ENCODE measurements at regions of chr5 and their contacts with region 1.

Region 1: DNA sequence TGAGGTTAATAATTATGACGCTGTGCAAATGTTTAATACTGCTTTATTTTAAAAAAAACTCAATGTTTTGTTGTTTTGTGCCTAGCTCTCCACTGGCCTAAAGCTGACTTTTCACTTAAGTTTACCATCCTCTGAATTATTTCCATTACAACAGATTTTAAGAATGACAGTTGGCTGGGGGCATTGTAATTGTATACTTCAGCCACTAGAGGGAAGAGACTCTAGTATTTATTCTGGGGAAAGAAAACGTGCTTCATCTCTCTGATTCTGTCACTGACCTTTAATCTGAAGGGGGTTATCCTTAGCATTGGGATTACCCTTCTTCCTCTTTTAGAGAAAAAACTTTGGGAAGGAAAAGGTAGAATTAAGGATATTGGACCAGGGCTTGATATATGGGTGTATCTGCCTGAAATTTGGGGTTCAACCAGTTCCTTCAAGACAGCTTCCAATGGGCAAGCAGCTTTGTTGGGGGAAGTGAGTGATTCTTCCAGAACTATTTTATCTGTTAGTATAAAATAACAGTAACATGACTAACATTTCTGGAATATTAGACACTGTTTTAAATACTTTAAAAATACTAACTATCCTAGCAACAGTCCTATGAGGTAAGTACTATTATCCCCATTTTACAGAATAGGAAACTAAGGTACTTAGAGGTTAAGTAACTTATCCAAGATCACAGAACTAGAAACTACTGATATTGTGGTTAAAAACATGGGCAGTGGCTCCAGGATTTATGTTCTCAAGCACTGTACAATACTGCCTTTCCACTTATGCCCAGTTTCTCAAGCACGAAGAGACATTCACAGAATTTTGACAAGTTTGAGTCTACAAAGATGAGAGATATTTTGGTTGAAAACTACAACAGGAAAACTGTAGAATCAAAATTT is 208.4 kb downstream of the CD180 start:
- DNase-seq: peak; percentile 43
- ATAC-seq: peak; percentile 58
- H3K4me3 ChIP-seq: no peak overlapping the region
- H3K4me3 Mint-ChIP-seq: no peak overlapping the region
- H3K27ac ChIP-seq: no peak overlapping the region
- H3K27ac Mint-ChIP-seq: no peak overlapping the region
- H3K4me1 ChIP-seq: peaks cover 0 to 2% of the 10 kb centered on the region in 2 donors
- H3K4me1 Mint-ChIP-seq: peaks cover 2% of the 10 kb centered on the region
- H3K27me3 ChIP-seq: no peaks in the 10 kb centered on the region
- H3K27me3 Mint-ChIP-seq: no peaks in the 10 kb centered on the region
- CTCF ChIP-seq: peak; percentile 98

Region 2: GRCh38 chr5:67003935-67004729 is 15.9 kb after region 1 on chr5:
- CTCF ChIA-PET with region 1: interaction called, 8 read pairs
- POLR2A ChIA-PET with region 1: no interaction called
- intact Hi-C with region 1: loop called (anchors 2 kb)
- DNase-seq: peak; percentile 87
- ATAC-seq: peak; percentile 81
- H3K4me3 ChIP-seq: peak overlapping the region; percentile 44 to 91 (median 74)
- H3K4me3 Mint-ChIP-seq: peak overlapping the region; percentile 96
- H3K27ac ChIP-seq: peak overlapping the region in 1 of 2 donors; percentile 67
- H3K27ac Mint-ChIP-seq: peak overlapping the region; percentile 93
- H3K4me1 ChIP-seq: peaks cover 13 to 27% of the 10 kb centered on the region in 2 donors
- H3K4me1 Mint-ChIP-seq: peaks cover 35% of the 10 kb centered on the region
- H3K27me3 ChIP-seq: peaks cover 0 to 6% (median 2%) of the 10 kb centered on the region in 4 experiments
- H3K27me3 Mint-ChIP-seq: no peaks in the 10 kb centered on the region
- CTCF ChIP-seq: no peak

Region 3: DNA sequence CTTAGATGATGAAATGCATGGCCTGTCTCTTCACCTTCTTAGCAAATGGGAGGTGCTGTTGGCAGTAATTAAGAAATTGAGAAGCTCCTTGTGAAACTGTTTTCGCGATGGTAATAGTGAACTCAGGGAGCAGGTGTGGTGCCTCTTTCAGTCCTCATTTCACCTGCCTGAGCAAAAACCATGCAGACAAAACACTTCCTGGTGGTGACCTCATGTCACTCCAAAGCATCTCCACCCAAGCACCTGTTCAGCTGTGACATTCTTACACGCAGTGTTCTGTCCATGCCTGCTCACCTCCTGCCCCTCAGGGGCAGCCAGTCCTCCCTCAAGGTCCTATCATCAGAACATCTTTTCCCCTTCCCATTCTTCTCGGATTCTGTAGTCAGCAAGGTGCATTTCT is 61.9 kb after region 1 on chr5:
- CTCF ChIA-PET with region 1: no interaction called
- POLR2A ChIA-PET with region 1: no interaction called
- intact Hi-C with region 1: no loop called
- DNase-seq: no peak
- ATAC-seq: no peak
- H3K4me3 ChIP-seq: no peak overlapping the region
- H3K4me3 Mint-ChIP-seq: no peak overlapping the region
- H3K27ac ChIP-seq: no peak overlapping the region
- H3K27ac Mint-ChIP-seq: no peak overlapping the region
- H3K4me1 ChIP-seq: no peaks in the 10 kb centered on the region
- H3K4me1 Mint-ChIP-seq: peaks cover 11% of the 10 kb centered on the region
- H3K27me3 ChIP-seq: no peaks in the 10 kb centered on the region
- H3K27me3 Mint-ChIP-seq: no peaks in the 10 kb centered on the region
- CTCF ChIP-seq: no peak

Measured in B cell (primary cell).